IMR-90 (cell line): ENCODE measurements at regions of chr3 and their contacts with region 1.

Region 1: GRCh38 chr3:150703299-150704134 is at the start of gene ERICH6:
- DNase-seq: peak; percentile 85
- ATAC-seq: peak; percentile 99
- H3K4me3 ChIP-seq: peak within 1 kb of the TSS; percentile 91
- H3K27ac ChIP-seq: peak within 1 kb of the TSS; percentile 57
- H3K4me1 ChIP-seq: peaks cover 2% of the 10 kb centered on the region; the same call in 1 of the 2 replicates
- H3K27me3 ChIP-seq: no peaks in the 10 kb centered on the region
- CTCF ChIP-seq: 0 out of 2 replicates have a peak, but pooled peaks have one; percentile 3
- POLR2A ChIP-seq: peak; percentile 65
- RAD21 ChIP-seq: no peak
- total RNA-seq, gene ERICH6: under 0.01 TPM in 1 of 2 replicates, not detected in the other

Region 2: GRCh38 chr3:148847351-148847750 is 1856.2 kb before region 1 on chr3:
- CTCF ChIA-PET with region 1: no interaction called
- POLR2A ChIA-PET with region 1: no interaction called
- dilution Hi-C with region 1: no loop called
- in situ Hi-C with region 1: no loop called
- intact Hi-C with region 1: no loop called
- DNase-seq: peak; percentile 7
- ATAC-seq: no peak
- H3K4me3 ChIP-seq: no peak overlapping the region
- H3K27ac ChIP-seq: no peak overlapping the region
- H3K4me1 ChIP-seq: no peaks in the 10 kb centered on the region
- H3K27me3 ChIP-seq: no peaks in the 10 kb centered on the region
- CTCF ChIP-seq: no peak
- POLR2A ChIP-seq: no peak
- RAD21 ChIP-seq: no peak

Region 3: GRCh38 chr3:150803440-150803985 is 100.0 kb after region 1 on chr3:
- CTCF ChIA-PET with region 1: no interaction called
- POLR2A ChIA-PET with region 1: interaction called, 19 read pairs
- dilution Hi-C with region 1: no loop called
- in situ Hi-C with region 1: no loop called
- intact Hi-C with region 1: no loop called
- DNase-seq: no peak
- ATAC-seq: no peak
- H3K4me3 ChIP-seq: no peak overlapping the region
- H3K27ac ChIP-seq: no peak overlapping the region
- H3K4me1 ChIP-seq: no peaks in the 10 kb centered on the region
- H3K27me3 ChIP-seq: peaks cover 31% of the 10 kb centered on the region
- CTCF ChIP-seq: no peak
- POLR2A ChIP-seq: no peak
- RAD21 ChIP-seq: no peak

Region 4: DNA sequence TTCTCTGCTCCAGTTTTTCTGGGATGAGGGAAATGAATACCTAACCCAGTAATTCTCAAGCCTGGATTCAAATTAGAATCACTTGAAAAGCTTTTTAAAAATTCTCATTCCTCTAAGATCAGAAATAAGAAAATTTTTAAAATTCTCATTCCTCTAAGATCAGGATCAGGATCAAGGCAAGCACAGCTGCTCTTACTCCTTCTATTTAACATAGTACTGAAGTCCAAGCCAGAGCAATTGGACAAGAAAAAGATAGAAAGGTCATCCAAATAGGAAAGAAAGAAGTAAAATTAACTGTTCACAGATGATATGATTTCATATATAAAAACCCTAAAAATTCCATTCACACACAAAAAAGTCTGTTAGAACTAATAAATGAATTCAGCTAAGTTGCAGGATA is 293.2 kb after region 1 on chr3:
- CTCF ChIA-PET with region 1: no interaction called
- POLR2A ChIA-PET with region 1: no interaction called
- dilution Hi-C with region 1: no loop called
- in situ Hi-C with region 1: no loop called
- intact Hi-C with region 1: no loop called
- DNase-seq: no peak
- ATAC-seq: no peak
- H3K4me3 ChIP-seq: no peak overlapping the region
- H3K27ac ChIP-seq: no peak overlapping the region
- H3K4me1 ChIP-seq: no peaks in the 10 kb centered on the region
- H3K27me3 ChIP-seq: peaks cover 8% of the 10 kb centered on the region
- CTCF ChIP-seq: no peak
- POLR2A ChIP-seq: no peak
- RAD21 ChIP-seq: no peak